ENCODE measurements at regions of chr11 and their contacts with region 1.

Region 1: DNA sequence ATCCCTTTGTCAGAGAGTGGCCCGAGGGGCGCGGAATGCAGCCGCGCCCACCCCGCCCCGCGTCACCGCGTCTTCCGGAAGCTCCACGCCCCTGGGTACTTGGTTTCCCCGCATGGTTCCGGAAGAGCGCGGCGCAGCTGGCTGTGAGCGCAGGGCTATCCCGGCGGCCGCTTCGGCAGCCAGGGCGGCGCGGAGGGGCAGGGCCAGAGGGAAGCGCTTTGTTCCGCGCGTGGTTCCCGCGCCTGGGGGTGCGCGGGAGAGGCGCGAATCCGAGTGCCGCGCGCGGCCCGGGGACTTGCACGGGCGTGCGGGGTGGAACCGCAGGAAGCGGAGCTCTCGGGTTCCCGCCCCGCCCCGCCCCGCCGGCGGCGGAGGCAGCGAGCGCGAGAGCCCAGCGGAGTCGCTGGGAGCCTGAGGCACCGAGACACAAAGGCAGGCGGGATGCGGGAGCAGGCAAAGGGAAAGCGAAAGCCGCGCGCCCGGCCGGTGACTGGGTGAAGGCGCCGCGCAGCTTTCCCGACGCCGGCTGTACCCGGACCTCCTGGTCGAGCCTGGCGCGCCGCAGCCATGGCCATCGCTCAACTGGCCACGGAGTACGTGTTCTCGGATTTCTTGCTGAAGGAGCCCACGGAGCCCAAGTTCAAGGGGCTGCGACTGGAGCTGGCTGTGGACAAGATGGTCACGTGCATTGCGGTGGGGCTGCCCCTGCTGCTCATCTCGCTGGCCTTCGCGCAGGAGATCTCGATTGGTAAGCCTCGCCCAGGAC is at the start of gene PANX1:
- DNase-seq: peak; percentile 77
- H3K4me3 Mint-ChIP-seq: no peak within 1 kb of the TSS
- H3K27ac Mint-ChIP-seq: no peak within 1 kb of the TSS
- H3K4me1 Mint-ChIP-seq: peaks cover 22% of the 10 kb centered on the region
- H3K27me3 Mint-ChIP-seq: no peaks in the 10 kb centered on the region
- total RNA-seq, gene PANX1: 13.7 to 13.9 TPM

Region 2: GRCh38 chr11:93784152-93784934 is 344.6 kb before region 1 on chr11 and contains the start of gene MED17:
- CTCF ChIA-PET with region 1: interaction called, 4 read pairs
- POLR2A ChIA-PET with region 1: interaction called, 14 read pairs
- DNase-seq: peak; percentile 91
- H3K4me3 Mint-ChIP-seq: peak within 1 kb of the TSS; percentile 97
- H3K27ac Mint-ChIP-seq: peak within 1 kb of the TSS; percentile 90
- H3K4me1 Mint-ChIP-seq: peaks cover 50% of the 10 kb centered on the region
- H3K27me3 Mint-ChIP-seq: no peaks in the 10 kb centered on the region
- total RNA-seq, gene MED17: 40.6 to 42.9 TPM

Region 3: DNA sequence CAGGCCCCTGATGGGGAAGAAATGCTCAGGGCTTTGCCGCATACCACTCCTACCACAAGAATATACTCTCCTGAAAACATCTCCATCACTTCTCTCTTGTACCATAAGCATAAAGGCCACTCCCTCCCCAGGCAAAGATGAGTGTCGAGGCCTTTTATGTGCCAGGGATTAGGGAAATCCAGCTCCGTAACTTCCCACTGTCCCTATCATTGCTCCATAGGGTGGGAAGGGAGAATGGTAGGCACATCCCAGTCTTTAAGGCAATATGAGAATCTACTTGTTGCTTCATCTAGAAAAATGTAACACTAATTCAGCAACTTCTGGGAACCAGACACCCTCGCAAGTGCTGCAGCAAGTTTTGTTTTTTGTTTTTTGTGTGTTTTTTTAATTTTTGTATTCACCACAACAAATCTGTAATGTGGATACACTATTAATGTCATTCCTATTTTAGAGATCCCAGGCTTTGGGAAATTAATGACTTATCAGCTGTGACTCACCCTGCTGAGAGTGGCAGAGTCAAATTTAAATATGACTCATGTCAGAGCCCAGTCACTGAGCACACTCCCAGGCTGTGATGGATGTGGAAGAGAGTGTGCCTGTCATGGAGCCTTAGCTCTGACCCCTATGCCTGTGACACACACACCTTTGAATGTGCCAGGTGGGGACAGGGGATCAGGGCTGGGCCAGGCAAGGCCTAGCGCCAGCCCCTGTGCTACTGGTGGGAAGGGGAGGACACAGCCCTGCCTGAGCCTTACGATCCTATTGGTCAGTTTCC is 23.2 kb after region 1 on chr11:
- CTCF ChIA-PET with region 1: interaction called, 3 read pairs
- POLR2A ChIA-PET with region 1: interaction called, 14 read pairs
- DNase-seq: no peak
- H3K4me3 Mint-ChIP-seq: no peak overlapping the region
- H3K27ac Mint-ChIP-seq: no peak overlapping the region
- H3K4me1 Mint-ChIP-seq: peaks cover 59% of the 10 kb centered on the region
- H3K27me3 Mint-ChIP-seq: no peaks in the 10 kb centered on the region

Region 4: DNA sequence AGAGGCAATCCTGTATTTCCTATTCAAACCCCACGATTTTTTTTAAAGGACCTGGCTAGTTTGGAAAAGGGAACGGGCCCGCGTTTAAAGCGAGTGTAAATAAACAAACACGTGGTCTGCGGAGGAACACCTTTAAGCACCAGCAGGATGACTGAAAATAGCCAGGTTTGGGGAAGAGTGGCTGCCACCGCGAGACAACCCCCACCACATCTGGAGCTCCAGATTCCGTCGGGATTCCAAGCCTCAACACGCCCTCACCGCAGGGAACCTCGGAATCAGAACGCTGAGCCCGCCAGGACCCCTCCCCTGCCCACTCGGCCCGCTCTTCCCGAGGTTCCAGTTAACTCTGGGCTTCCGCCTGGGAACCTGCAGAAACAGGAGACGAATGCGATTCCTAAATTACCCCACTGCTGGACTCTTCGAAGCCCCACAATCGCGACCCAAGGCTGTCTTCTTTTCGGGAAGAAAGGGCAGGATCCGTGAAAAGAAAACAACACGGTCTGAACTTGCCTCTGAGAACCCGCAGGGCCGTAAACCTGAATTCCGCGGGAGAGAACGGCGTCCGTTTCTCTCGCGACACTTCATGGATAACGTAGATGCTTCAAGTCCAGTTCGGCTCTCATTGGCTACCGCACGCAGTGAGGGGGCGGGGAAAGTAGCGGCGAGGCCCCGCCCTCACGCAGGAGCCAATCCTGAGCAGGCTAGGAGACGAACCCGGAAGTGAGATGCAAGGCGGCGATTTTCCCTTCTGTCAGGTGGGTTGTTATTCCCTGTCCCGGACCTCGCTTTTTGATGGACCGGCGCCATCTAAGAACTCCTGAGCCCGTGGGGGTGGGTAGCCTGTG is 364.6 kb after region 1 on chr11 and contains the starts of genes ANKRD49 and MRE11:
- CTCF ChIA-PET with region 1: no interaction called
- POLR2A ChIA-PET with region 1: interaction called, 11 read pairs
- DNase-seq: peak; percentile 98
- H3K4me3 Mint-ChIP-seq: peak within 1 kb of the TSS; percentile 89
- H3K27ac Mint-ChIP-seq: peak within 1 kb of the TSS; percentile 81
- H3K4me1 Mint-ChIP-seq: peaks cover 34% of the 10 kb centered on the region
- H3K27me3 Mint-ChIP-seq: no peaks in the 10 kb centered on the region
- total RNA-seq, gene ANKRD49: 26.9 to 27.0 TPM
- total RNA-seq, gene MRE11: 35.7 to 37.0 TPM

Measured in activated CD4-positive, alpha-beta memory T cell treated with anti-CD3 and anti-CD28 coated beads, Interleukin-2, amount 10 ng/mL, durations not matched to agents 7 days and 5 days (primary cell).